Activated CD8-positive, alpha-beta T cell treated with anti-CD3 and anti-CD28 coated beads for 36 hours (primary cell): ENCODE measurements at regions of chr7 and their contacts with region 1.

Region 1: GRCh38 chr7:156949541-156950380 is at the start of gene NOM1:
- DNase-seq: peak; percentile 92
- ATAC-seq: peak; percentile 94
- H3K4me3 Mint-ChIP-seq: peak within 1 kb of the TSS; percentile 96
- H3K27ac Mint-ChIP-seq: peak within 1 kb of the TSS; percentile 82
- H3K4me1 Mint-ChIP-seq: peaks cover 28% of the 10 kb centered on the region
- H3K27me3 Mint-ChIP-seq: peaks cover 7% of the 10 kb centered on the region
- CTCF ChIP-seq: peak; percentile 52
- total RNA-seq, gene NOM1: 32.4 to 34.0 TPM

Region 2: GRCh38 chr7:156892821-156893706 is 56.7 kb before region 1 on chr7 and contains the start of gene LMBR1:
- CTCF ChIA-PET with region 1: interaction called, 19 read pairs
- POLR2A ChIA-PET with region 1: interaction called, 20 read pairs
- intact Hi-C with region 1: no loop called
- DNase-seq: peak; percentile 95
- ATAC-seq: peak; percentile 82
- H3K4me3 Mint-ChIP-seq: peak within 1 kb of the TSS; percentile 92
- H3K27ac Mint-ChIP-seq: peak within 1 kb of the TSS; percentile 94
- H3K4me1 Mint-ChIP-seq: peaks cover 41% of the 10 kb centered on the region
- H3K27me3 Mint-ChIP-seq: no peaks in the 10 kb centered on the region
- CTCF ChIP-seq: peak; percentile 69
- total RNA-seq, gene LMBR1: 42.7 to 50.6 TPM

Region 3: DNA sequence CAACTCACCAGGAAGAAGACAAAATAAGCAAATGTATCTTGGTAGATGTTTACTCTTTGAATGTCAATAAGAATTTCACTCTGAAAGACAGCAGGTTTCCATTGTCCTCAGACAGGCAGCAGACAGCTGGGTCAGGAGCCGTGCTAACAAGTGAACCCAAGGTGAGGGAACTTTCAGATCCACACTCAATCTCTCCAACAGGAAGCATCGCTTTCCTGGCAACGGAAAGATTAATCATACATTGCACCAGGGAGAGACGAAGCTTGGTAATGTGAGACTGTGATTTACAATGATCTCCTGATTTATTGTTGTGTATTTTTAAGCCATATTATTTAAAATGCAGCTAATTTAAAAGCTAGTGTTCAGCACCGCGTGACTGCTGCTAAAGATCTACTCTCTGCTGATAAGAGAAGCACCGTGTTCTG is 17.8 kb before region 1 on chr7:
- CTCF ChIA-PET with region 1: interaction called, 15 read pairs
- POLR2A ChIA-PET with region 1: interaction called, 10 read pairs
- intact Hi-C with region 1: no loop called
- DNase-seq: no peak
- ATAC-seq: no peak
- H3K4me3 Mint-ChIP-seq: no peak overlapping the region
- H3K27ac Mint-ChIP-seq: no peak overlapping the region
- H3K4me1 Mint-ChIP-seq: peaks cover 11% of the 10 kb centered on the region
- H3K27me3 Mint-ChIP-seq: peaks cover 20% of the 10 kb centered on the region
- CTCF ChIP-seq: no peak

Region 4: GRCh38 chr7:156969972-156970420 is 20.2 kb after region 1 on chr7:
- CTCF ChIA-PET with region 1: interaction called, 29 read pairs
- POLR2A ChIA-PET with region 1: interaction called, 3 read pairs
- intact Hi-C with region 1: no loop called
- DNase-seq: no peak
- ATAC-seq: no peak
- H3K4me3 Mint-ChIP-seq: no peak overlapping the region
- H3K27ac Mint-ChIP-seq: no peak overlapping the region
- H3K4me1 Mint-ChIP-seq: no peaks in the 10 kb centered on the region
- H3K27me3 Mint-ChIP-seq: no peaks in the 10 kb centered on the region
- CTCF ChIP-seq: peak; percentile 55

Region 5: GRCh38 chr7:157193274-157193673 is 243.5 kb after region 1 on chr7:
- CTCF ChIA-PET with region 1: no interaction called
- POLR2A ChIA-PET with region 1: no interaction called
- intact Hi-C with region 1: no loop called
- DNase-seq: no peak
- ATAC-seq: no peak
- H3K4me3 Mint-ChIP-seq: no peak overlapping the region
- H3K27ac Mint-ChIP-seq: no peak overlapping the region
- H3K4me1 Mint-ChIP-seq: no peaks in the 10 kb centered on the region
- H3K27me3 Mint-ChIP-seq: no peaks in the 10 kb centered on the region
- CTCF ChIP-seq: no peak